GM13977 (cell line): ENCODE measurements at regions of chr4 and their contacts with region 1.

Region 1: GRCh38 chr4:38856524-38857337 is at the start of gene TLR6:
- DNase-seq: peak; percentile 54
- CTCF ChIP-seq: peak; percentile 73

Region 2: GRCh38 chr4:38114386-38115150 is 742.2 kb before region 1 on chr4:
- in situ Hi-C with region 1: no loop called
- DNase-seq: no peak
- CTCF ChIP-seq: no peak

Region 3: GRCh38 chr4:38535717-38536116 is 321.0 kb before region 1 on chr4:
- in situ Hi-C with region 1: no loop called
- DNase-seq: no peak
- CTCF ChIP-seq: no peak

Region 4: DNA sequence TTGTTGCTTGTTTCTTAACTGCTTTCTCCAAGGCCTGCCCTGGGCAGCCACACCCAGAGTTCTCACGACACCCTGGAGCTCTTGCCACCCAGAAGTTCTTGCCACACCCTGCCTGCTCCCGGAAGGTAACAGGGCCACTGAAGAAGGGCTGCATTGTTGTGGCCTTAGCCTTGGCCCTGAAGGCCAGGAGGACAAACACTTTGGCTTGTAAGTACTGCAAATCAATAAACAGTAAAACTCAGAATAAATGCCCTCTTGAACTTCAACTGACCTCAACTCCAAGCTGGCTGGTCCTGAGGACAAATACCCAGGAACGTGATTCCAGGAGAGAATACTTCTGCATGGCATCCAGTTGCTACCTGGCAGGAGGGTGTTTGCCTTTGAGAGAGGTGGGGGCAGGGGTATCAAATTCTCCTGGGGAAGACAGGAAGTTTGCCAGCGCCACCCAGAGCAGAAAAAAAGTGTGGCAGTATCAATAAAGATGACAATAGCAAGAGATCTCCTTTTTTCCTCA is 128.0 kb before region 1 on chr4:
- in situ Hi-C with region 1: no loop called
- DNase-seq: no peak
- CTCF ChIP-seq: peak; percentile 22

Region 5: GRCh38 chr4:38768968-38769394 is 87.8 kb before region 1 on chr4:
- in situ Hi-C with region 1: loop called (anchors 10 kb)
- DNase-seq: no peak
- CTCF ChIP-seq: no peak

Region 6: DNA sequence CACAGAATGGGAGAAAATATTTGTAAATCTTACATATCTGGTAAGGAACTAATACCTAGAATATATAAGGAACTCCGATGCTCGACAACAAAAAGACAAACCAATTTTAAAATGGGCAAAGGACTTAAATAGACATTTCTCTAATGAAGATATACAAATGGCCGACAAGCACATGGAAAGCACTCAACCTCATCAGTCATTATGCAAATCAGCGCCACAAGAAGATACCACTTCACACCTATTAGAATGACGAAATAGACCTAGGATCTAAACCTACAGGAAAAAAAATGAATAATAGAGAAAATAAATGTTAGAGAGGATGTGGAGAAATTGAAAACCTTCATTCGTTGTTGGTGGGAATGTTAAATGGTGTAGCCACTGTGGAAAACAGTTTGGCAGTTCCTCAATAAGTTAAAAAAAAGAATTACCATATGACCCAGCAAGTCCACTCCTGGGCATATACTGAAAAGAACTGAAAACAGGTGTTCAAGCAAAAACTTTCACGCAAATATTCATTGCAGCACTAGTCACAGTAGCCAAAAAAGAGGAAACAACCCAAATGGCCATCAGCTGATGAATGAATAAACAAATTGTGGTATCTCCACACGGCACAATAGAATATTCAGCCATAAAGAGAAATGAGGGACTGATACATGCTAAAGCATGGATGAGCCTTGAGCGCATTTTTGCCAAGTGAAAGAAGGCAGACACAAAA is 268.3 kb after region 1 on chr4:
- in situ Hi-C with region 1: no loop called
- DNase-seq: no peak
- CTCF ChIP-seq: no peak